Activated CD4-positive, alpha-beta T cell treated with anti-CD3 and anti-CD28 coated beads for 36 hours (primary cell): ENCODE measurements at regions of chr20 and their contacts with region 1.

Region 1: GRCh38 chr20:53708129-53708968 is 114.7 kb upstream of the ZNF217 start:
- DNase-seq: peak; percentile 66
- ATAC-seq: peak; percentile 81
- H3K4me3 Mint-ChIP-seq: peak overlapping the region; percentile 59
- H3K27ac Mint-ChIP-seq: peak overlapping the region; percentile 94
- H3K4me1 Mint-ChIP-seq: peaks cover 51% of the 10 kb centered on the region
- H3K27me3 Mint-ChIP-seq: no peaks in the 10 kb centered on the region

Region 2: GRCh38 chr20:53643031-53643832 is 65.1 kb before region 1 on chr20:
- CTCF ChIA-PET with region 1: interaction called, 4 read pairs
- POLR2A ChIA-PET with region 1: interaction called, 6 read pairs
- intact Hi-C with region 1: loop called in 1 of 2 experiments (anchors 1 kb)
- DNase-seq: peak; percentile 80
- ATAC-seq: peak; percentile 98
- H3K4me3 Mint-ChIP-seq: peak overlapping the region; percentile 54
- H3K27ac Mint-ChIP-seq: peak overlapping the region; percentile 97
- H3K4me1 Mint-ChIP-seq: peaks cover 33% of the 10 kb centered on the region
- H3K27me3 Mint-ChIP-seq: no peaks in the 10 kb centered on the region

Region 3: GRCh38 chr20:53692413-53693067 is 15.8 kb before region 1 on chr20:
- CTCF ChIA-PET with region 1: interaction called, 5 read pairs
- POLR2A ChIA-PET with region 1: interaction called, 3 read pairs
- intact Hi-C with region 1: loop called (anchors 1 to 2 kb)
- DNase-seq: peak; percentile 24
- ATAC-seq: peak; percentile 30
- H3K4me3 Mint-ChIP-seq: peak overlapping the region; percentile 39
- H3K27ac Mint-ChIP-seq: no peak overlapping the region
- H3K4me1 Mint-ChIP-seq: peaks cover 31% of the 10 kb centered on the region
- H3K27me3 Mint-ChIP-seq: no peaks in the 10 kb centered on the region

Region 4: DNA sequence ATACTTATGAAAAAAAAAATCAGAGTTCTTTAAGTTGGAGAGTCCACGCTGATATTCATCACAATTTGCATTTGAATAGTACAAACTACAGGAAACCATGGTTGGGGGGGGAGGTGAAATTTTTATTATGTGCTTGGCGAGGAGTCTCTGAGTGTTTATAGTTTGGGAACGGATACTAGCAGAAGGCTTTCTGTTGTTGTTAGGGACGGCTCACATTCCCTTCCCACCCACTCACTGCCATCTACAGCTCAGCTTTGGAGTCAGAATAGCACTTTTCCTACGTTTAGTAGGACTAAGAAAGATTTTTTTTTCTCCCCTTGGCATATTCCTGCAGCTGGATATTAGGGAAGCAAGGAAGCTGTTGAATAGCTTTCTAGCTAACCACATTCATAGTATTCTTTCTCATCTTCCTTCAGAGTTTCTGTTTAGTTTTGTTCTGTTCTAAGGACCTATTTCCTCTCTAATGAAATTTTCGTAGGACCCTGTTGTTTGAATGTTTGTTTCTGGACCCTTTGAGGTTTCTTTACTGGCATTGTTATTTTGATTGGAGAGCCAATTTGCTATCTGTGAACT is 120.4 kb after region 1 on chr20:
- CTCF ChIA-PET with region 1: no interaction called
- POLR2A ChIA-PET with region 1: interaction called, 4 read pairs
- intact Hi-C with region 1: loop called in 1 of 2 experiments (anchors 5 kb)
- DNase-seq: no peak
- ATAC-seq: no peak
- H3K4me3 Mint-ChIP-seq: peak overlapping the region; percentile 64
- H3K27ac Mint-ChIP-seq: peak overlapping the region; percentile 86
- H3K4me1 Mint-ChIP-seq: peaks cover 42% of the 10 kb centered on the region
- H3K27me3 Mint-ChIP-seq: no peaks in the 10 kb centered on the region

Region 5: GRCh38 chr20:53852019-53852418 is 143.7 kb after region 1 on chr20:
- CTCF ChIA-PET with region 1: no interaction called
- POLR2A ChIA-PET with region 1: no interaction called
- intact Hi-C with region 1: no loop called
- DNase-seq: no peak
- ATAC-seq: no peak
- H3K4me3 Mint-ChIP-seq: no peak overlapping the region
- H3K27ac Mint-ChIP-seq: no peak overlapping the region
- H3K4me1 Mint-ChIP-seq: peaks cover 33% of the 10 kb centered on the region
- H3K27me3 Mint-ChIP-seq: no peaks in the 10 kb centered on the region

Region 6: DNA sequence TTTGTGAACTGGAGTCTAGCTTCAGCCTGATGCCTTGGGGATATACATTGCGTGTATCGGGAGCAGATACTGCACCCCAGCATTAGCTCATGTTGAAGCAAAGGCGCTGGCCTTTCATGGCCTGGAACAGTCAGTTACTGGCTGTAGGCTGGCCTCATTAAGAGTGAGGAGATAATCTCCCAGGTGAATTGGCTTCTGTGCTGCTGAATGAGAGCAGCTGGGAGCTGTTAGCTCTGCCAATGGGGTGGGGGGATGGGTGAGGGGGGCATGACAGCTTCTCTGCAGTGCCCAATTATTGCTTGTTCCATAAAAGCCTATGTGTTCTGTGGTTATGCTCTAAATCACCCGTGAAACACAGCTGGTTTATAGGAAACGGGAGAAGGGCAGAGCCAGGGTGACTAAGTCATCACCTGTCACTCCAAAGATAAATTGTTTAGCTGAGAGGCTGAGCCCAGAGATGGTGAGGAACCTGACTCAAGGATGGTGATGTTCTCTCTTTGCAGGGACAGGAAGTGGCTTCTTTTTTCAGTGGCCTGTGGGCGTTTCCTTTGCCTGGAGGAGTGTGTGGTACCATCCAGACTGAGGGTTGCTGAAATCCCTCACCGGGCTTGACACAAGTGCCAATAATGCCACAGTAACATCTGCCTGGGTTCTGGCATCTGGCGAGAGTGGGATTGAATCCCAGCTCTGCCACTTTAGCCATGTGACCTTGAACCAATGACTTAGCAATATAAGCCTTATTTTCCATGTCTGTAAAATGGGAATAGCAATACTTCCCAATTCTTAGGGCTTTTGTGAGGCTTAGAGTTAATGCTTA is 191.2 kb after region 1 on chr20:
- CTCF ChIA-PET with region 1: interaction called, 3 read pairs
- POLR2A ChIA-PET with region 1: interaction called, 6 read pairs
- intact Hi-C with region 1: loop called in 1 of 2 experiments (anchors 1 kb)
- DNase-seq: peak; percentile 89
- ATAC-seq: peak; percentile 92
- H3K4me3 Mint-ChIP-seq: peak overlapping the region; percentile 10
- H3K27ac Mint-ChIP-seq: peak overlapping the region; percentile 92
- H3K4me1 Mint-ChIP-seq: peaks cover 49% of the 10 kb centered on the region
- H3K27me3 Mint-ChIP-seq: no peaks in the 10 kb centered on the region

Region 7: GRCh38 chr20:54284934-54285704 is 576.8 kb after region 1 on chr20:
- CTCF ChIA-PET with region 1: no interaction called
- POLR2A ChIA-PET with region 1: no interaction called
- intact Hi-C with region 1: no loop called
- DNase-seq: peak; percentile 68
- ATAC-seq: peak; percentile 87
- H3K4me3 Mint-ChIP-seq: peak overlapping the region; percentile 62
- H3K27ac Mint-ChIP-seq: peak overlapping the region; percentile 94
- H3K4me1 Mint-ChIP-seq: peaks cover 22% of the 10 kb centered on the region
- H3K27me3 Mint-ChIP-seq: peaks cover 11% of the 10 kb centered on the region